ENCODE measurements at regions of chr1 and their contacts with region 1.

Region 1: DNA sequence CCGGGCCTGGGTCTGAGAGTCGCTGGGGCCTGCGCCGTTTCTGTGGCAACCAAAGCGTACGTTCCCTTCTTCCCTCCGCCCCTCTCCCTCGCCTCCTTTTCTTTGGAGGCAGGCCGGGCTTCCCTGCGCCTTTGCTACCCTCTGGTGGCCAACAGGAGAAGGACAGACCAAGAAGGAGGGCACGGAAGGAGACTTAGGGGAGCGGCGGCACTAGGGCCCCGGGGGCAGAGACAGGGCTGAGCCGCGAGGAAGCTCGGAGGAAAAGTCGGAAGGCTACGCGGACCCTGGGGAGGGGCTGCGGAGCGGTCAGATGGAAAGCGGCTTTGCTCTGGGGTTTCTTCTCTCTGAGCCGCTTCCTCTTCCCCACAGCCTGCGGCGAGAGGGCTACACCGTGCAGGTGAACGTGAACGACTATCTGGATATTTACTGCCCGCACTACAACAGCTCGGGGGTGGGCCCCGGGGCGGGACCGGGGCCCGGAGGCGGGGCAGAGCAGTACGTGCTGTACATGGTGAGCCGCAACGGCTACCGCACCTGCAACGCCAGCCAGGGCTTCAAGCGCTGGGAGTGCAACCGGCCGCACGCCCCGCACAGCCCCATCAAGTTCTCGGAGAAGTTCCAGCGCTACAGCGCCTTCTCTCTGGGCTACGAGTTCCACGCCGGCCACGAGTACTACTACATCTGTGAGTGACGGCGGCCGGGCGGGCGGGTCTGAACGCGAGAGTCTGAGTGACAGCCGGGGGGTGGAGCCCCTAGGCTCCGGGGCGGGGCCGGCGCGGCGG is 6.3 kb downstream of the EFNA3 start:
- DNase-seq: peak; percentile 99
- ATAC-seq: peak; percentile 92

Region 2: GRCh38 chr1:154479764-154480421 is 605.0 kb before region 1 on chr1:
- intact Hi-C with region 1: loop called (anchors 10 kb)
- DNase-seq: no peak
- ATAC-seq: peak; percentile 95

Region 3: GRCh38 chr1:154906621-154907081 is 178.3 kb before region 1 on chr1:
- intact Hi-C with region 1: loop called (anchors 1 kb)
- DNase-seq: no peak
- ATAC-seq: peak; percentile 27

Region 4: GRCh38 chr1:155044812-155045690 is 39.9 kb before region 1 on chr1:
- intact Hi-C with region 1: loop called (anchors 2 kb)
- DNase-seq: peak; percentile 84
- ATAC-seq: peak; percentile 89

Region 5: DNA sequence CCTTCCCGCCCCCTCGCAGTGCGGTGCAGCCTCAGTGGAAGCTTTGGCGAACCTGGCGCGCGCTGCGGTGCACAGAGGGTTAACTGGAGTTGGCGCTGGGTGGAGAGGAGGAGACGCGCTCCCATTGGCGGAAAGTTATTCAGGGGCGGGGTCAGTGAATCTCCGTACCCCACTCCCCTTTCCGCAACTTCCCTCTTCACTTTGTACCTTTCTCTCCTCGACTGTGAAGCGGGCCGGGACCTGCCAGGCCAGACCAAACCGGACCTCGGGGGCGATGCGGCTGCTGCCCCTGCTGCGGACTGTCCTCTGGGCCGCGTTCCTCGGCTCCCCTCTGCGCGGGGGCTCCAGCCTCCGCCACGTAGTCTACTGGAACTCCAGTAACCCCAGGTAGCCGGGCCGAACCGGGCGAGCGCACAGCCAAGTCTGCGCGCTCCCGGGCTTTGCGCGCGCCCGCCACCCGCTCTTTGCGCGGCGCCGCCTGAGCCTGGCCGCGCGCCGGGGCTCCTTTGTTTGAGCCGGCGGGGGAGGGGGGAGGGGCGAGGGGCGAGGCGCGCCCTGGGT is 21.3 kb before region 1 on chr1 and contains the start of gene EFNA4:
- intact Hi-C with region 1: loop called (anchors 2 kb)
- DNase-seq: peak; percentile 89
- ATAC-seq: peak; percentile 92
- total RNA-seq, gene EFNA4: 2.1 TPM